ENCODE measurements at regions of chr13 and their contacts with region 1.

Region 1: DNA sequence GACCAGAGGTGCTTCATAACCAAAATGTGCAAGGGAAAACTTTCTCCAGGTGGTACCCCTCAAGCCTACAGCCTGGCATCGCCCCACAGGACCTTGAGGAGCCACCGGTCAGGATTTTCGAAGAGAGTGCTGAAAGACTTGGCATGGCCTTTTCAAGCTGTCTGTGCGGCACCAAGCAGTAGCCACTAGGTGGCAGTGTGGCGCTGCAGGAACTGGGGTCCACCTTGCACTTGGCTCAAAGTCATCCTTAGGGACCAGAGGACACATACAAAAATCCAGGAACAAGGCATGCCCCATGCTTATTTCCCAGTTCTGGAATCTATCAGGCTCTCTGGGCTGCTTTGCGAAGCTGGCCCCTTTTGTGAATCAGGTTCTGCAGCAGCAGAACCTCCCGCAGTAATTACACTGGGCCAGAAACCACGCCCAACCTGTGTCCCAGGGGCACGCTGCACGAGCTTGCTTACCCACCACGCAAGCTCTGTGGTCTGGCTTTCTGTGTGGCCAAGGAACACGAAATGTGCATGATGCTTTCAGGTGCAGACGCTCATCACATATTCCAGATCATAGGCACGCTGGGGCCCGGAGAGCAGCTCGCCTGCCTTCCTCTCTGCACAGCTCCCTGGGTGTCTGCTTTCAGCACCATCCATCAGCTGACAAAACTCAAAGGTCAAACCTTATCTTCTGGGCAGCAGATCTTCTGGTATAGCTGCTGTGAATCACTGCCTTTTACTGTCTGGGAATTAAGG is 87.2 kb downstream of the SLC7A1 start:
- DNase-seq: peak; percentile 74
- H3K4me3 Mint-ChIP-seq: no peak overlapping the region
- H3K27ac Mint-ChIP-seq: no peak overlapping the region
- H3K4me1 Mint-ChIP-seq: no peaks in the 10 kb centered on the region
- H3K27me3 Mint-ChIP-seq: no peaks in the 10 kb centered on the region
- CTCF ChIP-seq: peak; percentile 86

Region 2: DNA sequence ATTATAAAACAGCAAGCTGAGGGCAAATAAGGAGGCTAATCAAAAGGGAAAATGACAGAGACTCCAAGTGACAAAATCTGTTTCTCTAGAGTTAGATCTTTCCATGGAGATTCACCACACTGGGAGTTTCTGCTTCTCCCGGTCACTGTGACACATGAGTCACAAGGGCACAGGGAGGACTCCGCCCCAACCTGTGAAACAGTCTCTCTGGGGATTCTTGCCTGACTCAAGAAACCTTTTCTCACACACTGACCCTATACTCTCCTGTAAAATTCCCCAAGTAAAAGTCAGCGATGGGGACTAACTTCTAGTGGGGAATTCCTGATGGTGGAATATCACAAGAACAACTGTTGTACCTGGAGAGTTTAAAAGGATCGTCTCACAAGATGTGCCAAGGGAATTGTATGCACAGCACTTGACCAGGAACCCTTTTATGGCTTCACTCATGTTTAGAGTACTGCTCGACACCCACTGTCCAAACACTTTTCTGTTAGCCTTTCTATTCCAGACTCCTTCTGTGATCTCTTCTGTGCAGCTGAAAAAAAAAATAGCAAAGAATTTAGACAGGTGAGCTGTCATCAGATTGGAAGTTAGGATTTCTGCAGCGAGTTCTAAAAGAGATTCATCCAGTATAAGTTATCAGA is 1473.0 kb before region 1 on chr13:
- CTCF ChIA-PET with region 1: no interaction called
- POLR2A ChIA-PET with region 1: no interaction called
- intact Hi-C with region 1: no loop called
- DNase-seq: peak; percentile 33
- H3K4me3 Mint-ChIP-seq: no peak overlapping the region
- H3K27ac Mint-ChIP-seq: no peak overlapping the region
- H3K4me1 Mint-ChIP-seq: peaks cover 7% of the 10 kb centered on the region
- H3K27me3 Mint-ChIP-seq: peaks cover 7% of the 10 kb centered on the region
- CTCF ChIP-seq: no peak

Region 3: GRCh38 chr13:29294821-29295220 is 213.5 kb before region 1 on chr13:
- CTCF ChIA-PET with region 1: no interaction called
- POLR2A ChIA-PET with region 1: no interaction called
- intact Hi-C with region 1: no loop called
- DNase-seq: no peak
- H3K4me3 Mint-ChIP-seq: no peak overlapping the region
- H3K27ac Mint-ChIP-seq: no peak overlapping the region
- H3K4me1 Mint-ChIP-seq: no peaks in the 10 kb centered on the region
- H3K27me3 Mint-ChIP-seq: peaks cover 7% of the 10 kb centered on the region
- CTCF ChIP-seq: no peak

Region 4: GRCh38 chr13:29522044-29522685 is 13.9 kb after region 1 on chr13:
- CTCF ChIA-PET with region 1: interaction called, 19 read pairs
- POLR2A ChIA-PET with region 1: no interaction called
- intact Hi-C with region 1: no loop called
- DNase-seq: peak; percentile 54
- H3K4me3 Mint-ChIP-seq: no peak overlapping the region
- H3K27ac Mint-ChIP-seq: no peak overlapping the region
- H3K4me1 Mint-ChIP-seq: no peaks in the 10 kb centered on the region
- H3K27me3 Mint-ChIP-seq: no peaks in the 10 kb centered on the region
- CTCF ChIP-seq: no peak

Region 5: DNA sequence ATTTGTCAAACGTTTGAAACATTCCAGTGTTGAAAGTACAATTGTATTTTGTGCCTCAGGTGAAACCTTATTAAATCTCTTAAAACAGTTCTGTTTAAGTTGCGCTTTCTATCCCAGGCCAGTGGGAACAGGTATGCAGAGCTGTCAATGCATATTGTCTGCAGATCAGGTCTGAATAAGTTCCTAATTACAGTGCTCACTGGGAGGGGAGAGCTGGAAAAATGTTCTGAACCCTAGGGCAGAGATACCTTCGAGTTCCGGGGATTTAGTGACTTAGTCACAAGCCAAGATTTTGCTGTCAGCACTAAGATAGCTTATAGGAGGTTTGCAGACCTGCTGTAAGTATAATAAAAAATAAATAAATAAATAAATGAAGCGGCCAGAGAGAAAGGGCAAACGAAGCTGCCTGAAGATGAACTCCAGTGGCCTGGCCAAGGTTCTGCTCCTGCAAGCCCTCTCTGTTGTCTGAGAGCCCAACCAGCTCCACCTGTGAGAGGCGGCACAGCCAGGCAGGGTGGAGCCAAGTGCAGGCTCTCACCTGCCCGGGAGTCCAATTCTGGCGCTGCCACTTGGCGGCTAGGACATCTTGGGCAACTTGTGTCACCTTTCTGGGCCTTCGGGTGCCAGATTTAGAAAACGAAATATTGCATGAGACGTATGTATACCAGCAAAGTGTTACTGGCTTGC is 185.1 kb after region 1 on chr13:
- CTCF ChIA-PET with region 1: interaction called, 11 read pairs
- POLR2A ChIA-PET with region 1: interaction called, 3 read pairs
- intact Hi-C with region 1: no loop called
- DNase-seq: peak; percentile 85
- H3K4me3 Mint-ChIP-seq: no peak overlapping the region
- H3K27ac Mint-ChIP-seq: no peak overlapping the region
- H3K4me1 Mint-ChIP-seq: peaks cover 5% of the 10 kb centered on the region
- H3K27me3 Mint-ChIP-seq: no peaks in the 10 kb centered on the region
- CTCF ChIP-seq: no peak

Region 6: GRCh38 chr13:29713839-29714238 is 205.5 kb after region 1 on chr13:
- CTCF ChIA-PET with region 1: interaction called, 127 read pairs
- POLR2A ChIA-PET with region 1: interaction called, 3 read pairs
- intact Hi-C with region 1: no loop called
- DNase-seq: peak; percentile 34
- H3K4me3 Mint-ChIP-seq: no peak overlapping the region
- H3K27ac Mint-ChIP-seq: no peak overlapping the region
- H3K4me1 Mint-ChIP-seq: no peaks in the 10 kb centered on the region
- H3K27me3 Mint-ChIP-seq: peaks cover 41% of the 10 kb centered on the region
- CTCF ChIP-seq: peak; percentile 70

Measured in MCF 10A (cell line).